ENCODE measurements at regions of chr5 and their contacts with region 1.

Region 1: DNA sequence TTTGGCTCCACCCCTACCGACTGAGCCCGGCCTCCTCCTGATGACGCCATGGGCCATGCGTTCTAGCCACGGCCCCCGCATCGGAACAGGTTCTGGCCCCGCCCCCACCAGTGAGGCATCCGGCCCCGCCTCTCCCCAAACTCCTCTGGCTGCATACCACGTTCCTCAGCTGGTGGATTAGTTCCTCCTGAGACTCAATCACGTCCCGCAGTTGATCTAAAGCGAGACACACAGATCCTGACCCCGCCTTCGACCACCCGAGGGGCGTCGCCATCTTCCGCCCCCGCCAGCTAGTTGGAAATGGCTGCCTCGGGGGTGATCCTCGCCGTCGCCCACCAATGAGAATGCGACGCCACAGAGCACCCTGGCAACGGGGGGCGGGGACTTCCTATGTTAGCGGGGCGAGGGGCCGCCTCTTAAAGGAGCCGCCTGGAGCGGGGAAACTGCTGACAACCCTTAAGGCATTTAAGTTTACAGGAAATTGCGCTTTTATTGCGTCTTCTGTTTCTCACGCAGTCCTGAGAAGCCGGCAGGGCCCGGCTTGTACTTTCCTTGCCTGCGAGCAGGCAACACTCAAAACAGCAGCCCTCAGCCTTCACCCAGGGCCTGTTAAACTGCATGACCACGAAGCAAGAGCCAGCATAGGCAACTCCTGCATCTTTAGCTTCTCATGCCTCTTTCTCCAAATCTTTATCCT is at the start of gene SPATA24:
- DNase-seq: peak; percentile 99
- H3K4me3 Mint-ChIP-seq: peak within 1 kb of the TSS; percentile 96
- H3K27ac Mint-ChIP-seq: peak within 1 kb of the TSS; percentile 100
- H3K4me1 Mint-ChIP-seq: peaks cover 43% of the 10 kb centered on the region
- H3K27me3 Mint-ChIP-seq: no peaks in the 10 kb centered on the region
- total RNA-seq, gene SPATA24: 9.4 to 9.5 TPM

Region 2: DNA sequence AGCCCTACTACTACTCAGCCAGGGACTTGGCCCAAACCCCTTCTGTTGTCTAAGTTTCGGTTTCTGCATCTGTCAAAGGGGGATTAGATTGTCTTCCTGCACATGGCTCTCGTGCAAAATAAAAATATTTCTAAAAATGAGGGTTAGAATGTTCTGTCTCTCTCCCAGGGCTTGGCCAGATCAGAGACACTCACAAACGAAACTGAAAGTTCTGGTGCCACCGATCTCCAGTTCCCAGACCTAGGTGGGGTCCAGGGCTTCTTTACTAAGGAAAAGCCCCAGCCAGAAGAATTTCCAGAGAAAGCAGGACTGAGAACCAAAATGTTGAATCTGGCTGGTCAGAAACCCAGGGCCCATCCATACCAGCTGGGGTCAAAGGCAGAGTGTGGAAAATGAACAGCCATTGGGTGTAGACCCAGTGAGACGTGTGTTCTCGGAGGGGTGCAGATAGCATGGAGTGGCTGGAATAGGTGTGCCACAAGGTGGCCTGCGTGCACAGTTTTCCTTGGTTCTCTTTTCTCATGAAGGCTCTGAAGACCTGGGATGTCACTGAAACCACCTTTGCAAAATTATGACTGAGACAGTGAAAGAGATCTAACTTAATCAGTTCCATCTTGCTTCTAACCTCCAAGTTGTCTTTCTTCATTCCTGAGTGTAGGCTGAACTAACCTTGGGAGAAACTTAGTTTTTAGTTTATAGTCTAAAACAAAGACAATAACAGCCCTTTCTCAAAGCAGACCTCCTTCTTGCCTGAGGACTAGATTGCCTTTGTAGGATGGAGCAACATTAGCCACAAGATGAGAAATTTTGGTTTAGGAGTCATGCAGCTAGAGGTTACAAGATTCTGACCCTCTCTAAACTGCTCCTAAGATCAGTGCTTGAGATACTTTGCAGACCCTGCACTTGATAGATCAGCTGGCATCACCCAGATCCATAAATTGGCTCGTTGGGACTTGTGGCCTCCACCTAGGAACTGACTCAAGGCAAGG is 18.6 kb before region 1 on chr5:
- CTCF ChIA-PET with region 1: interaction called, 26 read pairs
- POLR2A ChIA-PET with region 1: interaction called, 63 read pairs
- DNase-seq: peak; percentile 54
- H3K4me3 Mint-ChIP-seq: peak overlapping the region; percentile 70
- H3K27ac Mint-ChIP-seq: peak overlapping the region; percentile 88
- H3K4me1 Mint-ChIP-seq: peaks cover 59% of the 10 kb centered on the region
- H3K27me3 Mint-ChIP-seq: no peaks in the 10 kb centered on the region

Region 3: GRCh38 chr5:139392678-139393496 is 11.0 kb before region 1 on chr5:
- CTCF ChIA-PET with region 1: interaction called, 26 read pairs
- POLR2A ChIA-PET with region 1: interaction called, 63 read pairs
- DNase-seq: peak; percentile 92
- H3K4me3 Mint-ChIP-seq: peak overlapping the region; percentile 99
- H3K27ac Mint-ChIP-seq: peak overlapping the region; percentile 90
- H3K4me1 Mint-ChIP-seq: peaks cover 65% of the 10 kb centered on the region
- H3K27me3 Mint-ChIP-seq: no peaks in the 10 kb centered on the region

Region 4: DNA sequence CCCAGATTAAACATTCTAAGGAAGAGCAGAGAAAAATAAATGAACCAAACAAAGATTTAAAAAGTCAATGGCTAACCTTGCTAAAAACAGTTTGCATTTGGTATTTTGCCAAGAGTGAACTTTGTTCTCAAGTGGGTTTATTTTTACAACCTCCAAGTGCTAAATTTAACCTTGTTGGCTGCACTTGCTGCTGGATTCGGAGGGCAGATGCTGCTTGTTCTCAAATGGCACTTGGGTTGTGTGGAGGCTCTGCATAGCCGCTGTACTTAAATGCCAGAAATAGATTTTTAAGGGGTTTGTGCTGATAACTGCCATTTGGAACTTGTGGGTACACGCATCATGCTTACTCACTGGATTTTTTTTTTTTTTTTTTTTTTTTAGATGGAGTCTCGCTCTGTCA is 13.3 kb after region 1 on chr5:
- CTCF ChIA-PET with region 1: interaction called, 10 read pairs
- POLR2A ChIA-PET with region 1: interaction called, 137 read pairs
- DNase-seq: no peak
- H3K4me3 Mint-ChIP-seq: no peak overlapping the region
- H3K27ac Mint-ChIP-seq: peak overlapping the region; percentile 93
- H3K4me1 Mint-ChIP-seq: peaks cover 83% of the 10 kb centered on the region
- H3K27me3 Mint-ChIP-seq: no peaks in the 10 kb centered on the region

Region 5: DNA sequence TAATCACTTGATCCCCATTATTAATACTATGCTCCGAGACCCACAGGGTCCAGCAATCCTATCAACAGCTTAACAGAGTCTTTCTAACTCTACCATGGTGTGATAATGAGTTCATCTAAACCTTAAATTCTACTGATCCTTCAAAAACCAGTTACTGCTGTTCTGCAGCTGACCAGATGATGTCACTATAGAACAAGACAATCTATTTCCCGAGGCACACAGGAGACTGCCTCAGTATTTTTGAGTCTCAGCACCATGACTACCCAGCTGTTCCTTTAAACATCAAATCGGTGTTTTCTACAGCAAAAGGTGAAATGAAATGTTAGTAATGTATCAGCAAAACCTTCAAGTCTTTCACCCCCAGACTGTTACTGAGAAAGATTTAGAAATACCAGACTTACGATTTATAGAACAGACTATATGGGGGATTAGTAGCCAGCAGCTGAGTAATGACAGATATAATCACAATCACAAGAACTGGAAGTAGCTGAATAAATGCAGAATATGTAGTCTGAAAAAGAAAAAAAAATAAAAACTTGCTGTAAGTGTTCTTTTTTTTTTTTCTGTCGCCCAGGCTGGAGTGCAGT is 18.5 kb after region 1 on chr5:
- CTCF ChIA-PET with region 1: interaction called, 10 read pairs
- POLR2A ChIA-PET with region 1: interaction called, 137 read pairs
- DNase-seq: peak; percentile 59
- H3K4me3 Mint-ChIP-seq: no peak overlapping the region
- H3K27ac Mint-ChIP-seq: peak overlapping the region; percentile 36
- H3K4me1 Mint-ChIP-seq: peaks cover 46% of the 10 kb centered on the region
- H3K27me3 Mint-ChIP-seq: no peaks in the 10 kb centered on the region

Region 6: GRCh38 chr5:139574641-139575312 is 170.8 kb after region 1 on chr5:
- CTCF ChIA-PET with region 1: no interaction called
- POLR2A ChIA-PET with region 1: no interaction called
- DNase-seq: no peak
- H3K4me3 Mint-ChIP-seq: no peak overlapping the region
- H3K27ac Mint-ChIP-seq: peak overlapping the region; percentile 53
- H3K4me1 Mint-ChIP-seq: peaks cover 69% of the 10 kb centered on the region
- H3K27me3 Mint-ChIP-seq: no peaks in the 10 kb centered on the region